Endothelial cell of umbilical vein (primary cell): ENCODE measurements at regions of chr18 and their contacts with region 1.

Region 1: GRCh38 chr18:71045331-71046065 is 756.7 kb downstream of the SOCS6 start:
- DNase-seq: peak; percentile 58
- H3K4me3 ChIP-seq: no peak overlapping the region
- H3K27ac ChIP-seq: peak overlapping the region; percentile 35
- H3K4me1 ChIP-seq: peaks cover 48% of the 10 kb centered on the region
- H3K27me3 ChIP-seq: no peaks in the 10 kb centered on the region
- CTCF ChIP-seq: no peak
- POLR2A ChIP-seq: no peak

Region 2: DNA sequence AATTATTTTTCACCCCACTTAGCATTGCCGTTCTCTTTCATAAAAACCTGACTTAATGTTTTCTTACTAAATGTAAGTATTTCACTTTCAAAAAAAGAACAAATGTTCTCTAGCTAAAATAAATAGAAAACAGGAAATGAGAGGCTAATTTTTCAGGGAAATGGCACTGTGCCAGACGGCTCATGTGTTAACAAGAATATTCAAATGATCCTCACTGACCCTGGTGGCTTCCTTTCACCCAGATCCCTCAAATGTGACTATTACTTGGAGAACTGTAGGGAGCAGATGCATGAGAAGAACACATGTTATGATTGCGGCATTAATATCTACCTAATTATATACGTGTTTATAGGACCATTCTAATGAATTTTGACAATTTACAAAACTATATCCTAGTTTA is 71.0 kb after region 1 on chr18:
- CTCF ChIA-PET with region 1: no interaction called
- POLR2A ChIA-PET with region 1: no interaction called
- dilution Hi-C with region 1: no loop called
- intact Hi-C with region 1: loop called (anchors 1 kb)
- DNase-seq: peak; percentile 83
- H3K4me3 ChIP-seq: no peak overlapping the region
- H3K27ac ChIP-seq: peak overlapping the region; percentile 52
- H3K4me1 ChIP-seq: peaks cover 25% of the 10 kb centered on the region
- H3K27me3 ChIP-seq: no peaks in the 10 kb centered on the region
- CTCF ChIP-seq: no peak
- POLR2A ChIP-seq: no peak